Psoas muscle (tissue), 8 donors: ENCODE measurements at regions of chr2 and their contacts with region 1.

Region 1: DNA sequence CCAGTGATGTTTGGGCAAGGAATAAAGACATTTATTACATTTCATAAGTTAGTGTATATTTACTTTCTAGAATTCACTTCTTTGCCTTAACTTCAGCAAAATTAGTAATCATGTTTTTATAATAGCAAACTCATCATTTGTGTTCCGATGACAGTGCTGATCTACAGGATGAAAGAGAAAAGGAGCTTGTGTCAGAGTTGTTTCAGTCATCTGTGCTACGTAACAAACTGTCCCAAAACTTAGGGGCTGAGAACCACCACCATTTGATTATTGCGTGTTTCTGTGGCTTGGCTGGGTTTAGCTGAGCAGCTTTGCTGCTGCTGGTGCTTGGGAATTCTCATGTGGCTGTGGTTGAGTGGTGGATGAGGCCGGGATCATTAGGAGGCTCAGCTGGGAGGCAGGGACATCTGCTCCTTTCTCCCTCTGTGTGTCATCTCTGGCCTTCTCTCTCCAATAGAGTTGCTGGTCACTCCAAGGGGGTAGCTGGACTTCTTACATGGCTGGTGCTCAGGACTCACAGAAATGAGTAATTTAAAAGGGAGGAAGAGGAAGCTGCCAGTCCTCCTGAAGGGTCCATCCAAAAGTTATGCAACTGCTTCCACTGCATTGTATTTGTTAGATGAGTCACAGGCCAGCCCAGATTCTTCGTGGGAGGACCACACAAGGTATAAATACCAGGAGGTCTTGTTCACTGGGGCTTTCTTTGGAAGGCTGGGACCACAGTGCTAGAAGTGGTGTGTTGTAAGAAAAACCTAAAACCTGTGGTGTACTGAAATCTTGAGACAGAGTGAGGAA is 43.4 kb upstream of the HAAO start:
- DNase-seq: peak in 1 of 2 donors; percentile 61
- ATAC-seq: peak; percentile 57 to 81 (median 78)
- H3K4me3 ChIP-seq: no peak overlapping the region
- H3K27ac ChIP-seq: peak overlapping the region; percentile 16
- H3K4me1 ChIP-seq: no peaks in the 10 kb centered on the region
- H3K27me3 ChIP-seq: no peaks in the 10 kb centered on the region
- CTCF ChIP-seq: no peak

Region 2: GRCh38 chr2:42854207-42854818 is 18.5 kb after region 1 on chr2:
- intact Hi-C with region 1: no loop called
- DNase-seq: peak; percentile 69 to 83
- ATAC-seq: peak; percentile 19 to 69 (median 52)
- H3K4me3 ChIP-seq: no peak overlapping the region
- H3K27ac ChIP-seq: peak overlapping the region; percentile 16
- H3K4me1 ChIP-seq: no peaks in the 10 kb centered on the region
- H3K27me3 ChIP-seq: no peaks in the 10 kb centered on the region
- CTCF ChIP-seq: no peak

Region 3: GRCh38 chr2:43251171-43251731 is 415.5 kb after region 1 on chr2:
- intact Hi-C with region 1: loop called in 1 of 2 experiments (anchors 5 kb)
- DNase-seq: no peak
- ATAC-seq: peak; percentile 43 to 58 (median 53)
- H3K4me3 ChIP-seq: no peak overlapping the region
- H3K27ac ChIP-seq: peak overlapping the region; percentile 65
- H3K4me1 ChIP-seq: no peaks in the 10 kb centered on the region
- H3K27me3 ChIP-seq: no peaks in the 10 kb centered on the region
- CTCF ChIP-seq: no peak